GM10248 (cell line): ENCODE measurements at regions of chr1 and their contacts with region 1.

Region 1: DNA sequence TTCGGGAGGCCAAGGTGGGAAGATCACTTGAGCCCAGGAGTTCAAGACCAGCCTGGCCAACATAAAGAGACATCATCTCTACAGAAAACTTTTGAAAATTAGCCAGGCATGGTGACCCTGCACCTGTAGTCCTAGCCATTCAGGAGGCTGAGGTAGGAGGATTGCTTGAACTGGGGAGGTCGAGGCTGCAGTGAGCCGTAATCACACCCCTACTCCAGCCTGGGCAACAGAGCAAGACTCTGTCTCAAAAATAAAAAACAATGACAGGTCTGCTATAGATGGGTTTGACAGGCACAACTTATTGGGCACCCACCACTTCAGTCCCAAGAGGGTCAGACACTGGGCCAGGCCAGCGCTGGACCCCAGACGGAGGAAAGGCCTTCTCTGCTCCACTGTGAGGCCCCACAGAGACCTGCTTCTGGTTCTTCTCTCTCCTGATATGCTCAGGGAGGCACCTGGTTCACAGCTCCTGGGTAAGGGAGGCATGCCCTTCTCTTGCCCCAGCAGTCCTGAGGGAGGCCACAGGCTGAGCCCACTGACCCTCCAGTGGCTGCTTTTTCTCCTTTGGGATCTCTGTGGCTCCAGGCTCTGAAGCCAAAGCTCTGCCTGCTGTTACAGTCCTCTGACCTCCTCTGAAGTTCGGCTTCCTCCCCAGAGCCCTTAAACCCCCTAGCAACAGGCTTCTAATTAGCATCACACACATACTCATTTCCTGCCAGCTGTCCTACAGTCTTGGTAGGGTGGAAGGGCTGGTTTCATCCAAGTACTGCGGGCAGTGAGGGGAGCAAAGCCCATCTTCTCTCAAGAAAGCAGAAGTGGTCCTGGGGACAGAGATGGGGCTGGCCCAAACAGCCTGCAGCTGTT is 14.4 kb downstream of the S100A16 start:
- DNase-seq: peak; percentile 88
- CTCF ChIP-seq: no peak

Region 2: DNA sequence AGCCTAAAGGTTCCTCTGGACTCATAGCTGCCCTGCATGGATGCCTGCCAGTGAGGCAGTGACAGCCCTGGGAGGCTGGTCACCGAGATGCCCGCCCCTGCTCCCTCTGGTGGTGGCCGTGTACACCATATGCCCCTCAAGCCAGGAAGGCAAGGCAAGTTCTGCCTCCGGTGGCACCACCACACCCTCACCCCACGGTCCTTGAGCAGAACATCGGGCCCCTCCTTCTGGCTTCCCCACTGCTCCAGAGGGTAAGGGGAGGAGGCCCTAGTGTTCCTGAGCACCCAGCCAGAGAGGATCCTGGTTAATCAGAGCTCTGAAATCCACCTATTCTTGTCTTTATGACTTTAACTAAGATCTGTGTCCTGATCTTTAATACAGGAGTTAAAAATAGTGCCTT is 19.1 kb after region 1 on chr1:
- CTCF ChIA-PET with region 1: interaction called, 21 read pairs
- POLR2A ChIA-PET with region 1: no interaction called
- DNase-seq: peak; percentile 34
- CTCF ChIP-seq: peak; percentile 83